Mammary epithelial cell (primary cell): ENCODE measurements at regions of chr14 and their contacts with region 1.

Region 1: DNA sequence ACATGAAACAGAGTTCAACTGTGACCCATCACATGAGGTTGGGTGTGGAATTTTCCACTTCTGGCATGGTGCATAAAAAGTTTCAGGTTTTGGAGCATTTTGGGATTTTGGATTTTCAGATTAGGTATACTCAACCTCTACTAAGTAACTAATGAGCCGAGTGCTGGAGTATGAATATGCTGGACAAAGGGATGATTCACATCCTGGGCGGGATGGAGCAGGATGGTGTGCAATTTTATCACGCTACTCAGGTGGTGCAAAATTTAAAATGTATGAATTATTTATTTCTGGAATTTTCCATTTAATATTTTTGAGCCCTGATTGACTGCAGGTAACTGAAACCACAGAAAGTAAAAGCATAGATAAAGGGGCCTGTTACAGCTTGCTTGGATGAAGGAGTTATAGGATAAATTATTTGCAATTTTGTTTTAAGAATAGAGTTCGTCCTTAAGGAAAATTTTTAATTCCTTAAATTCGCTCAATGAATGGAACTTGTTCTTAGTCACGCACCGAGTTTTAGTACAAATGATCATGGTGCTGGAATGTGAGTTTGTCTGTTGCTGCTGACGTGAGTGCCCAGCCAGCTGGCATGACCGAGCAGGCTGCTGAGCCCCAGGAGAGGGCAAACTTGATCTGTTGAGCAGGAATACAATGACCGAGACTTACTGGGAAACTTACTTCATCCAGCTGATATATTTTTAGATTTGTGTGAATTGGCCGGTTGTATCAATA is 176.3 kb downstream of the ESR2 start:
- DNase-seq: peak; percentile 92
- H3K4me3 ChIP-seq: peak overlapping the region in 2 of 3 experiments; percentile 25 to 36
- H3K27ac ChIP-seq: peak overlapping the region; percentile 98
- H3K4me1 ChIP-seq: peaks cover 25% of the 10 kb centered on the region
- H3K27me3 ChIP-seq: no peaks in the 10 kb centered on the region
- CTCF ChIP-seq: peak; percentile 10 to 38

Region 2: DNA sequence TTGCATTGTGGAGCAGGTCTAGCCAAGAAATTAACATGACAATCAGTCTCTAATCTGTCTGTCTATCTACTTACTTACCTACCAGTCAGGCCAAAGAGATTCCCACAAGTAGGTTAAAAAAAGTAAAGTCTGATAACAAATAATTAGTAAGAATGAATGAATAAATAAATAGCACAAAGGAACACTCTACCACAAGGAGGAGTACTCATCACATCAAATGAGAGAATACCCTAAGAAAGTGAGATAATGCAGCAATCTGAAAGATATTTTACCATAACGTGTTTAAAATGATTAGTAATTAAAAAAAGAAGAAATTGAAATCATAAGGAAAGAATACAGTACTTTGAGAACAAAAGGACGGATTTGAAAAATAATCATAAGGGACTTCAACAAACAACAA is 77.8 kb before region 1 on chr14:
- CTCF ChIA-PET with region 1: no interaction called
- dilution Hi-C with region 1: no loop called
- in situ Hi-C with region 1: no loop called
- intact Hi-C with region 1: loop called (anchors 1 kb)
- DNase-seq: no peak
- H3K4me3 ChIP-seq: no peak overlapping the region
- H3K27ac ChIP-seq: no peak overlapping the region
- H3K4me1 ChIP-seq: no peaks in the 10 kb centered on the region
- H3K27me3 ChIP-seq: no peaks in the 10 kb centered on the region
- CTCF ChIP-seq: peak; percentile 35 to 41

Region 3: GRCh38 chr14:64060648-64061096 is 57.2 kb before region 1 on chr14:
- CTCF ChIA-PET with region 1: no interaction called
- dilution Hi-C with region 1: no loop called
- in situ Hi-C with region 1: no loop called
- intact Hi-C with region 1: loop called (anchors 1 kb)
- DNase-seq: peak; percentile 96
- H3K4me3 ChIP-seq: no peak overlapping the region
- H3K27ac ChIP-seq: peak overlapping the region; percentile 91
- H3K4me1 ChIP-seq: peaks cover 37% of the 10 kb centered on the region
- H3K27me3 ChIP-seq: no peaks in the 10 kb centered on the region
- CTCF ChIP-seq: peak; percentile 70 to 80

Region 4: GRCh38 chr14:64074961-64075612 is 42.8 kb before region 1 on chr14:
- CTCF ChIA-PET with region 1: no interaction called
- dilution Hi-C with region 1: no loop called
- in situ Hi-C with region 1: loop called in 1 of 2 experiments (anchors 5 kb)
- intact Hi-C with region 1: no loop called
- DNase-seq: peak; percentile 60
- H3K4me3 ChIP-seq: no peak overlapping the region
- H3K27ac ChIP-seq: no peak overlapping the region
- H3K4me1 ChIP-seq: peaks cover 8% of the 10 kb centered on the region
- H3K27me3 ChIP-seq: no peaks in the 10 kb centered on the region
- CTCF ChIP-seq: no peak